Activated CD4-positive, alpha-beta T cell treated with anti-CD3 and anti-CD28 coated beads, Interleukin-2, amount 10 ng/mL, durations not matched to agents 24 days and 14 days (primary cell): ENCODE measurements at regions of chr5 and their contacts with region 1.

Region 1: GRCh38 chr5:154811653-154812365 is 38.6 kb downstream of the FAXDC2 start:
- DNase-seq: peak; percentile 87
- H3K4me3 Mint-ChIP-seq: no peak overlapping the region
- H3K27ac Mint-ChIP-seq: no peak overlapping the region
- H3K4me1 Mint-ChIP-seq: peaks cover 16% of the 10 kb centered on the region
- H3K27me3 Mint-ChIP-seq: no peaks in the 10 kb centered on the region

Region 2: DNA sequence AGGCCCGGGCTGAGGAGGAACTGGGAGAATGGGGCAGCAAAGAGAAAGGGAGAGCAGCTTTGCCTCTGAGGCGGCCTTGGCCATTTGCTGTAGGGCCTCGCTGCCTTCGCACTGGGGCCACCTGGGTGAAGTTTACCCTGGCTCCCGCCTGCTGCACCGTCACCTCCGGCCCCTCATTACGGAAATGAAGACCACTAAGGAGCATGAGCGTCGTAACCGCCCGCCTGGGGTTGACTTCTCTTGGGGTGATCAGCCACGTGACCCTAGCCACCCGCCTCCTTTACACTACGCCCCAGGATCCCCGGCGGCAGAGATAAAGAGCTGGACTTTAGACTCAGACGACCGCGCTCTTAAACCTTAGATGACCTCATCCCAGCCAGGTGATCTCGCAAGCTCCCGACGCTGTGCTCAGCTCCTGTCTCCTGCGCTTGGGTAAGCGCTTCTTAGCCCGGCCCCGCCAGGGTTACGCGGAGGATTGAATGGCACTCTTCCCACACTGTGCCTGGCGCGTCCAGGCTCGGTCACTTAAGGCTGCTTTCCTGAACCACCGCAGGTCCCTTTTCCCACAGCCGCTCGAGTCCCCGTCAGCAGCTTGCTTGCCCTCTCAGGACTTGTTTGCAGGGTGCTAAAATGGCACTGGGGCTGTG is 164.6 kb before region 1 on chr5:
- intact Hi-C with region 1: loop called (anchors 1 kb)
- DNase-seq: peak; percentile 61
- H3K4me3 Mint-ChIP-seq: peak overlapping the region; percentile 74
- H3K27ac Mint-ChIP-seq: no peak overlapping the region
- H3K4me1 Mint-ChIP-seq: peaks cover 14% of the 10 kb centered on the region
- H3K27me3 Mint-ChIP-seq: peaks cover 37% of the 10 kb centered on the region